Thyroid gland (tissue), 4 donors: ENCODE measurements at regions of chr6 and their contacts with region 1.

Region 1: GRCh38 chr6:157379656-157380454 is 1.1 kb upstream of the ZDHHC14 start:
- DNase-seq: peak; percentile 88 to 91
- H3K4me3 ChIP-seq: peak overlapping the region; percentile 81 to 100 (median 96)
- H3K27ac ChIP-seq: peak overlapping the region; percentile 75 to 94 (median 91)
- H3K4me1 ChIP-seq: peaks cover 0 to 13% of the 10 kb centered on the region in 2 donors
- H3K27me3 ChIP-seq: no peaks in the 10 kb centered on the region
- CTCF ChIP-seq: no peak
- POLR2A ChIP-seq: peak in 1 of 2 donors; percentile 47

Region 2: GRCh38 chr6:157116426-157116825 is 263.4 kb before region 1 on chr6:
- intact Hi-C with region 1: no loop called
- DNase-seq: no peak
- H3K4me3 ChIP-seq: no peak overlapping the region
- H3K27ac ChIP-seq: no peak overlapping the region
- H3K4me1 ChIP-seq: no peaks in the 10 kb centered on the region
- H3K27me3 ChIP-seq: no peaks in the 10 kb centered on the region
- CTCF ChIP-seq: no peak
- POLR2A ChIP-seq: no peak

Region 3: GRCh38 chr6:157597446-157598312 is 217.8 kb after region 1 on chr6:
- intact Hi-C with region 1: loop called (anchors 10 kb)
- DNase-seq: peak; percentile 65 to 66
- H3K4me3 ChIP-seq: no peak overlapping the region
- H3K27ac ChIP-seq: peak overlapping the region in 2 of 3 donors; percentile 36 to 66
- H3K4me1 ChIP-seq: peaks cover 8 to 14% of the 10 kb centered on the region in 2 donors
- H3K27me3 ChIP-seq: no peaks in the 10 kb centered on the region
- CTCF ChIP-seq: peak in 5 of 6 experiments; percentile 26 to 64 (median 54)
- POLR2A ChIP-seq: no peak

Region 4: DNA sequence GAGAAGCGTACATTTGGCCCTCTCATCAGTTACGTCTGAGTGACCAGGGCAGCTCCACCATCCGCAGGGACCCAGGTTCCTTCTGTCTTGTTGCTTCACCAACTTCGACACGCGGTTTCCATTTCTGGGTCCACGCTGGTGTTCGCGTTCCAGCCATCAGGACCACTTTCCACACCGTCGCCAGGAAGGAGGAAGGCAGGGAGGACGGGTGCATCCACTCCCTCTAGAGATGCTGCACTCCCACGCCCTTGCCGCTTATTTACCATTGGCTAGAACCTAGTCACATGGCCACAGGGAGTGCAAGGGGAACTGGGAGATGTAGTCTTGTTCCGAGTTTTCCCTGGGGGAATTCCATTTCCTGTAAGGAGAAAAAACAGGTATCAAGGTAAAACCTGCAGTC is 410.0 kb after region 1 on chr6:
- intact Hi-C with region 1: no loop called
- DNase-seq: no peak
- H3K4me3 ChIP-seq: no peak overlapping the region
- H3K27ac ChIP-seq: no peak overlapping the region
- H3K4me1 ChIP-seq: peaks cover 24 to 26% of the 10 kb centered on the region in 2 donors
- H3K27me3 ChIP-seq: no peaks in the 10 kb centered on the region
- CTCF ChIP-seq: no peak
- POLR2A ChIP-seq: no peak